ENCODE measurements at regions of chr5 and their contacts with region 1.

Region 1: DNA sequence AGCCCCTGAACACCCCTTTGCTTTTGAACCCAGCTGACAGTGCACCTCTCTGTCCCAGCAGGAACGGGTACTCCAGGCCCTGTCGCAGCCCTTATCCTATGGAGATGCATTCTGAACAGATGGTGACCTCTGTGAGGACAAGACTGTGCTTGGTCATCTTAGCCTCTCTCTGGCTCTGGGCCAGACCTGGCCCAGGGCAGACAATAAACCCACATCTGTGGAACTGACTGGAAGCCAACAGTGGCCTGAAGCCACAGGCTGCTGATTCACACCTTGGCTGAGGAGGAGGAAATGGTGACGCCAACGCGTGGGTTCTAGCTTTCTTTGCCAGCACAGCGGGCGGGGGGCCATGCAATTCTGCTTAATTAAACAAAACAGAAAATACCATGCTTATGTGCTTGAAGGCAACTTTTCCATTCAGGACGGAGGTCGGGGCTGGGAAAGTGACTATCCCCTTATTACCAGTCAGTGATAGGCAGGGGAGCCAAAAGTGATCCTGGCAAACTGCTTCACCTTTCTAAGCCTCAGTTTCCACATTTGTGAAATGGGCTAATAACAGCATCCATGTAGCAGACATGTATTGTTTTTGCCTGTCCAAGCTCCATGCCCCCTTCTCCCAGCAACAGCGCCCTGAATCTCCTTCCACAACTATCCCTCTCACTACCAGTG is 10.8 kb downstream of the SH3PXD2B start:
- DNase-seq: peak; percentile 97
- H3K4me3 ChIP-seq: no peak overlapping the region
- H3K27ac ChIP-seq: peak overlapping the region; percentile 87
- H3K4me1 ChIP-seq: peaks cover 46% of the 10 kb centered on the region
- H3K27me3 ChIP-seq: no peaks in the 10 kb centered on the region
- CTCF ChIP-seq: no peak
- POLR2A ChIP-seq: peak; percentile 42

Region 2: DNA sequence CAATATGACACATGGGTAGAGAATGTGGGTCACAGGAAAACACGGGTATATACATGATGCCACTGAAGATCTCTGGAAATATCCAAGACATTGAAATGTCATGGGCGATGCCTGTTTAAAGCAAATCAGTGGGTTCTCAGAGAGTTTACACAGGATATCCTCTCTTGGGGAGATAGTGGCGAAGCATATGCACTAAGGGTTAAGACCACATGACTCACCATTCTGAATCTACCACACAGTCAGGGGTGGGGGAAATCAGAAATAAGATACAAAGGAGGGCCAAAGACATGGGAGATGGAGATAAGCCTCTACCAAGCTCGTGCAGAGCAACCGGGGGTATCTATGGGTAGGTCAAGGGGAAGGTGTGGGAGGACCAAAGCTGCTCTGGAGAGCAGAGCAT is 48.1 kb before region 1 on chr5:
- CTCF ChIA-PET with region 1: interaction called, 3 read pairs
- POLR2A ChIA-PET with region 1: no interaction called
- dilution Hi-C with region 1: no loop called
- intact Hi-C with region 1: loop called (anchors 5 kb)
- DNase-seq: peak; percentile 58
- H3K4me3 ChIP-seq: no peak overlapping the region
- H3K27ac ChIP-seq: peak overlapping the region; percentile 21
- H3K4me1 ChIP-seq: peaks cover 15% of the 10 kb centered on the region
- H3K27me3 ChIP-seq: no peaks in the 10 kb centered on the region
- CTCF ChIP-seq: no peak
- POLR2A ChIP-seq: peak; percentile 37

Region 3: GRCh38 chr5:172412724-172413286 is 30.8 kb before region 1 on chr5:
- CTCF ChIA-PET with region 1: no interaction called
- POLR2A ChIA-PET with region 1: no interaction called
- dilution Hi-C with region 1: no loop called
- intact Hi-C with region 1: loop called (anchors 1 kb)
- DNase-seq: peak; percentile 71
- H3K4me3 ChIP-seq: no peak overlapping the region
- H3K27ac ChIP-seq: peak overlapping the region; percentile 53
- H3K4me1 ChIP-seq: peaks cover 21% of the 10 kb centered on the region
- H3K27me3 ChIP-seq: no peaks in the 10 kb centered on the region
- CTCF ChIP-seq: no peak
- POLR2A ChIP-seq: no peak

Region 4: DNA sequence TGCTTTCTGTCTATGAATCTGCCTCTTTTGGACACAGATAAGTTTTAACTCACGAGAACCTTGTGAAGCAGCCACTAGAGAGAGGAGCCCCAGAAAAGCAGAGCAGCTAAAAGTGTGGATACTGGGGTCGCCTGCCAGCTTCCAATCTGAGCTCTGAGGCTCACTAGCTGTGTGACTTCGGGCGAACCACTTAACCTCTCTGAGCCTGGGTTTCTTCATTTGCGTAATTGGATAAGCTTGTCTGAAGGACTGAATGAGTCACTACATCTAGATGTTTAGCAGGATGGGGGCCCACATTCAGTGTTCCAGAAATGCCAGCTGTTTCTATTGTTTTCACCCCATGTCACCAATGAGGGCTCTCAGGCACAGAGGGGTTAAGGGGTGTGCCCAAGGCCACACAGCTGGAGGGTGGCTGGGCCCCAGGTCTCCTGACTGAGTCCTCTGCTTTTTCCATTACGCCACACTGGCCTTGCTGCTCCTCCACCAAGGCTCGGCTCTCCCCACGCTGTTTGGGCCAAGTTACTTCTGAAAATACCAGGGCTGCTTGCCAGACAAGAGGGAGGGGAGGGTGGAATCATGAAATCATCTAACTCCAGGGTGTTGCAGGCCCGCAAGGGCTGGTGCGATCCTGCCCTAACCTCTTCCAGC is 25.5 kb before region 1 on chr5:
- CTCF ChIA-PET with region 1: no interaction called
- POLR2A ChIA-PET with region 1: no interaction called
- dilution Hi-C with region 1: no loop called
- intact Hi-C with region 1: loop called (anchors 1 kb)
- DNase-seq: peak; percentile 80
- H3K4me3 ChIP-seq: no peak overlapping the region
- H3K27ac ChIP-seq: no peak overlapping the region
- H3K4me1 ChIP-seq: peaks cover 21% of the 10 kb centered on the region
- H3K27me3 ChIP-seq: no peaks in the 10 kb centered on the region
- CTCF ChIP-seq: no peak
- POLR2A ChIP-seq: no peak

Region 5: GRCh38 chr5:172958331-172959046 is 514.9 kb after region 1 on chr5:
- CTCF ChIA-PET with region 1: no interaction called
- POLR2A ChIA-PET with region 1: no interaction called
- dilution Hi-C with region 1: no loop called
- intact Hi-C with region 1: loop called (anchors 2 kb)
- DNase-seq: peak; percentile 58
- H3K4me3 ChIP-seq: peak overlapping the region; percentile 59 to 66 (median 63)
- H3K27ac ChIP-seq: peak overlapping the region; percentile 59
- H3K4me1 ChIP-seq: peaks cover 22% of the 10 kb centered on the region
- H3K27me3 ChIP-seq: no peaks in the 10 kb centered on the region
- CTCF ChIP-seq: no peak
- POLR2A ChIP-seq: no peak

Measured in endothelial cell of umbilical vein (primary cell).